ENCODE measurements at regions of chr11 and their contacts with region 1.

Region 1: GRCh38 chr11:44775366-44775984 is 48.7 kb downstream of the TSPAN18 start:
- DNase-seq: peak; percentile 90
- H3K4me3 ChIP-seq: no peak overlapping the region
- H3K27ac ChIP-seq: no peak overlapping the region
- H3K4me1 ChIP-seq: peaks cover 58% of the 10 kb centered on the region
- H3K27me3 ChIP-seq: no peaks in the 10 kb centered on the region
- CTCF ChIP-seq: peak; percentile 100

Region 2: DNA sequence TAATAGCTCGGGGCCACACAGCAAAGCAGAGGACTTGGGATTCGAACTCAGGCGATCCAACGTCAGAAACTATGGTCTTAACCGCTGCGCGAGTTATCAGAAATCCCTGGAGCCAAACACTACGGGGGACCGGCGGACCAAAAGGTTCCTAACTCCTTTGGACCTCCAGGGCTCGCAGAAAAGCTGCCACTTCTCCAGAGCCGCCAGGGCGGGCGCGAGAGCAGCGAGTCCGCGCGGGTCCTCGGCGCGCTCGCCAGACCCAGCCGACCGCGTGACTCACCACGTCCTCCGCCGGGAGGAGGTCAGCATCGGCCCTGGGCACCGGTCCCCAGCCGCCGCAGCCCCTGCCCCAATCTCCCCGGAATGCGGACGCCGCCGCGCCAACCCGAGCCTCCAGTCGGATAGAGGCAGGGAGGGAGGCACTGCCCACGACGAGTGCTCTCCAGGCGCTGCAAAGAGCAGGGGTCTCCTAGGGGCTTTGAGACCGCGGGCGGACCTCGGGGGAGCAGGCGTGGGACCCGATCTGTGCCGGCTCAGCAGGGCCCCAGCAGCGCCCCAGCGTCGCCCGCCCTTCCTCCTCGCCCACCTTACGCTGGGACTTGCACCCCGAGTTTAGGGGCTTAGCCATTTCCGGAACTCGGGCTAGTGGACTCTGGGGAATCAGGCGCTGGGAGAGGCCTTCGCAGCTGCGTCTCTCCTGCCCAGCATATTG is 459.4 kb before region 1 on chr11:
- CTCF ChIA-PET with region 1: no interaction called
- POLR2A ChIA-PET with region 1: no interaction called
- intact Hi-C with region 1: no loop called
- DNase-seq: peak; percentile 75
- H3K4me3 ChIP-seq: peak overlapping the region; percentile 43
- H3K27ac ChIP-seq: peak overlapping the region; percentile 6
- H3K4me1 ChIP-seq: peaks cover 37% of the 10 kb centered on the region
- H3K27me3 ChIP-seq: no peaks in the 10 kb centered on the region
- CTCF ChIP-seq: 0 out of 2 replicates have a peak, but pooled peaks have one; percentile 24

Region 3: DNA sequence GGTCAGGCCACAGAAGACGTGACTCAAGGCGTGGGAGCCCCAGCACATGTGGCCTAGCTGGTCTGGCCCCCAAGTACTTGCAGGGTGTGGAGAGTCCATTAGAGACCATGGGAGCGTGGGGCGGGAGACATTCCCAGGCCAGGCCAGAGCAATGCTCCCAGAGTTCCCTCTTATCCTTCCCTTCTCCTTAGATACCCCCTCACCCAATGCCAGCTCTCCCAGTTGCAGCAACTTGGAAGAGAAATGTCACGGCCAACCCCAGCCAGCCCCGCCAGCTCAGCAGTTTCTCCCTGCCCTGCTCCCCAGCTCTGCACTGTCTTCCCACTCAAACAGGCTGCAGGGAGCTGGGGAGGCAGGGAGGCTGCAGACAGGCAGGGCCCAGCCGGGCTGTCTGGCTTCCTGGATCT is 114.2 kb before region 1 on chr11:
- CTCF ChIA-PET with region 1: no interaction called
- POLR2A ChIA-PET with region 1: no interaction called
- intact Hi-C with region 1: no loop called
- DNase-seq: no peak
- H3K4me3 ChIP-seq: no peak overlapping the region
- H3K27ac ChIP-seq: no peak overlapping the region
- H3K4me1 ChIP-seq: no peaks in the 10 kb centered on the region
- H3K27me3 ChIP-seq: peaks cover 8% of the 10 kb centered on the region
- CTCF ChIP-seq: no peak

Region 4: GRCh38 chr11:44727373-44728287 is 47.8 kb before region 1 on chr11:
- CTCF ChIA-PET with region 1: no interaction called
- POLR2A ChIA-PET with region 1: no interaction called
- intact Hi-C with region 1: loop called (anchors 1 kb)
- DNase-seq: peak; percentile 93
- H3K4me3 ChIP-seq: peak overlapping the region; percentile 77
- H3K27ac ChIP-seq: peak overlapping the region; percentile 44
- H3K4me1 ChIP-seq: peaks cover 37% of the 10 kb centered on the region
- H3K27me3 ChIP-seq: no peaks in the 10 kb centered on the region
- CTCF ChIP-seq: peak; percentile 100

Region 5: DNA sequence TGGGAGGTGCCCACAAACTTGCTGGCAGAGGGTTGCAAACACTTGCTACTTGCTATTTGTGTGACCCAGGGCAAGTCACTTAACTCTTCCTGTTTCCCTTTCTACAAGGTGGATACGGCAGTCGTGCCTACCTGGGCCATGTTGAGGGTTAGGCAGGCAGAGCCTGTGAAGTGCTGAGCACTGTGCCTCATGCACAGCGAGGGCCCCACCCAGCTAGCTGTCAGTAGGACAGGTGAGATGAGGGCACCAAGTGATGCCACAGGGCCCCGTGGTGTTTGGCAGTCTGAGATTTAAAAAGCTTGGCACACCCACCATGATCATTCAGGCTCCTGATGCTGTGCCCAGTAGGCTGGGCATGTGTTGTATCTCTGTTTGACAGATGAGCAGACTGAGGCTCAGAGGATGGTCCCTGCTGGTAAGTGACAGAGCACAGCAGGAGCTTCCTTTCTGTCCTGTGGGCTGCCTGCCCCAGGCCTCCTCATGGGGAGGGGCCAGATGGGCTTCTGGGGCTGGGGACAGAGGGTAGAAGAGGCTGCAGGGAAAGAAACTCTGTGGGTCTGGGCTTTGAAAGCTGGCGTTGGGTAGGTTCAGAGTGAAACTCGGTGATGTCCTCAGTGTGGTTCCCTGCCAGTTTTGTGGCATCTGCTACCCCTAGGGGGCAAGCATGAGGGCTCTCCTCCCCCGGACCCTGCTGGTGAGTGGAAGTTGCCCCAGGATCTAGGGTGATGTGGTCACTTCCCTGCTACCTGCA is 10.6 kb after region 1 on chr11:
- CTCF ChIA-PET with region 1: interaction called, 5 read pairs
- POLR2A ChIA-PET with region 1: interaction called, 22 read pairs
- intact Hi-C with region 1: no loop called
- DNase-seq: peak; percentile 91
- H3K4me3 ChIP-seq: no peak overlapping the region
- H3K27ac ChIP-seq: no peak overlapping the region
- H3K4me1 ChIP-seq: peaks cover 52% of the 10 kb centered on the region
- H3K27me3 ChIP-seq: no peaks in the 10 kb centered on the region
- CTCF ChIP-seq: peak; percentile 55

Region 6: DNA sequence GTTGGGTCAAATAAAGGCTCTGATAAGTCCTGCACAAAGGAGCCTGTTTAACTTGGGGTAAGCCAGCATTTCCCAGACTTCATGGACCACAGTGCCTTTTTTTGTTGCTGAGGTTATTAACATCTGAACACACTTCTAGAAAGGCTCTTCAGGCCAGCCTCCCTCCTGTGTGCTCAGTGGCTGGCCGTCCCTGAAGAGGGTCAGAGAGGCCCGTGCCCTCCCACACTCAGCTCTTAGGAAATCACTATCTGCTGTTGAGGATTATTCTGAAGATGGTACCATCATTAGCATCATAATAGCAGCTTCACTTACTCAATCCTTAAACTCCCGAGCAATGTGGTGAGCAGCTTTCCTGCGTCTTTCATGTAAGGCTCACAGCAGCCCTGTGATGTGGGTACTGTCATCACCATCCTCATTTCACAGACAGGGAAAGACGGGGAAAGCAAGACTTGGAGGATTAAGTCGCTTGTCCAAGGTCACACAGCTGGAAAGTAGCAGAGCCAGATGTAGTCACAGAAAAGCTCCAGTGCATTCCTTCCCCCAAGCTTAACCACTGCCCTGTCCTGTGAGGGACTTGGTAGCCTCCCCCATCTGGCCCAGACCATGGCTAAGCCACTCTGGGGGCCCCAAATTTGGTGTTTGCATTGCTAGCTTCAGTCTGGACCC is 22.6 kb after region 1 on chr11:
- CTCF ChIA-PET with region 1: no interaction called
- POLR2A ChIA-PET with region 1: no interaction called
- intact Hi-C with region 1: no loop called
- DNase-seq: peak; percentile 82
- H3K4me3 ChIP-seq: no peak overlapping the region
- H3K27ac ChIP-seq: no peak overlapping the region
- H3K4me1 ChIP-seq: peaks cover 23% of the 10 kb centered on the region
- H3K27me3 ChIP-seq: no peaks in the 10 kb centered on the region
- CTCF ChIP-seq: no peak

Region 7: GRCh38 chr11:44883277-44883676 is 107.8 kb after region 1 on chr11:
- CTCF ChIA-PET with region 1: no interaction called
- POLR2A ChIA-PET with region 1: no interaction called
- intact Hi-C with region 1: loop called (anchors 5 kb)
- DNase-seq: no peak
- H3K4me3 ChIP-seq: no peak overlapping the region
- H3K27ac ChIP-seq: no peak overlapping the region
- H3K4me1 ChIP-seq: peaks cover 2% of the 10 kb centered on the region
- H3K27me3 ChIP-seq: no peaks in the 10 kb centered on the region
- CTCF ChIP-seq: no peak

Region 8: GRCh38 chr11:44936525-44936924 is 161.1 kb after region 1 on chr11:
- CTCF ChIA-PET with region 1: no interaction called
- POLR2A ChIA-PET with region 1: no interaction called
- intact Hi-C with region 1: no loop called
- DNase-seq: peak; percentile 93
- H3K4me3 ChIP-seq: no peak overlapping the region
- H3K27ac ChIP-seq: no peak overlapping the region
- H3K4me1 ChIP-seq: peaks cover 5% of the 10 kb centered on the region
- H3K27me3 ChIP-seq: no peaks in the 10 kb centered on the region
- CTCF ChIP-seq: peak; percentile 100

Measured in A673 (cell line).